Colonic mucosa (tissue), 4 donors: ENCODE measurements at regions of chr3 and their contacts with region 1.

Region 1: GRCh38 chr3:186540221-186540834 is 3.9 kb downstream of the CRYGS start:
- DNase-seq: peak; percentile 81
- H3K4me3 ChIP-seq: no peak overlapping the region
- H3K27ac ChIP-seq: no peak overlapping the region
- H3K4me1 ChIP-seq: no peaks in the 10 kb centered on the region
- H3K27me3 ChIP-seq: no peaks in the 10 kb centered on the region
- CTCF ChIP-seq: peak; percentile 74

Region 2: DNA sequence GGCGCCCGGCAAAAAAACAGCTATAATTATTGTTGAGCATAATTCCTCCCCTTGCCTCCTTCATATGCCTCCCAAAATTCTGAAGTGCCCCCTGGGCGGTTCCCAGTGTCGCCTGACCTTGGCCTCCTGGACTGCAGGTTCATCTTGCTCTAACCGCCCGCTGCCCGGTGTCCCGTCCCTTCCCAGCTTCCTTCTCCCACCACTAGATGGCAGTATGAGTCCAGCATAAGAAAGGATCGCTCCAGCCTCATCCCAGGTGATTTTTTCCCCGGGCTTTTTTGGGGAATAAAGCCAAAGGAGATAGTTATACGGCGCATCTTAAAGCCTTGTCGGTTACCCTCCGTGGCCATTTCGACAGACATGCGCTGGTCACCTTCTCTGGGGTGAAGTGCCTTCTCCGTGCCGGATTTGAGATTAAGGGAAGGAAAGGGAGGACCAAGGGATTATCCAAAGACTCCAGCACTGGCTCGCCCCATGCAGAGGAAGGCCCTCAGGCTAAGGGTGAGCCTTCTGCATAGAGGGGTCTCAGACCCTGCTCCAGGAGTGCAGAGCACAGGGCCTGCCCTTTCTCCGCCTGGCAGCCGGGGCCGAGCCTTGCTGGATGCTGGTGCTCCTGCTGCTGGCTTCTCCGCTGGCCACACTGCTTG is 556.7 kb before region 1 on chr3:
- intact Hi-C with region 1: loop called (anchors 5 kb)
- DNase-seq: peak; percentile 81
- H3K4me3 ChIP-seq: no peak overlapping the region
- H3K27ac ChIP-seq: no peak overlapping the region
- H3K4me1 ChIP-seq: no peaks in the 10 kb centered on the region
- H3K27me3 ChIP-seq: no peaks in the 10 kb centered on the region
- CTCF ChIP-seq: peak; percentile 88

Region 3: DNA sequence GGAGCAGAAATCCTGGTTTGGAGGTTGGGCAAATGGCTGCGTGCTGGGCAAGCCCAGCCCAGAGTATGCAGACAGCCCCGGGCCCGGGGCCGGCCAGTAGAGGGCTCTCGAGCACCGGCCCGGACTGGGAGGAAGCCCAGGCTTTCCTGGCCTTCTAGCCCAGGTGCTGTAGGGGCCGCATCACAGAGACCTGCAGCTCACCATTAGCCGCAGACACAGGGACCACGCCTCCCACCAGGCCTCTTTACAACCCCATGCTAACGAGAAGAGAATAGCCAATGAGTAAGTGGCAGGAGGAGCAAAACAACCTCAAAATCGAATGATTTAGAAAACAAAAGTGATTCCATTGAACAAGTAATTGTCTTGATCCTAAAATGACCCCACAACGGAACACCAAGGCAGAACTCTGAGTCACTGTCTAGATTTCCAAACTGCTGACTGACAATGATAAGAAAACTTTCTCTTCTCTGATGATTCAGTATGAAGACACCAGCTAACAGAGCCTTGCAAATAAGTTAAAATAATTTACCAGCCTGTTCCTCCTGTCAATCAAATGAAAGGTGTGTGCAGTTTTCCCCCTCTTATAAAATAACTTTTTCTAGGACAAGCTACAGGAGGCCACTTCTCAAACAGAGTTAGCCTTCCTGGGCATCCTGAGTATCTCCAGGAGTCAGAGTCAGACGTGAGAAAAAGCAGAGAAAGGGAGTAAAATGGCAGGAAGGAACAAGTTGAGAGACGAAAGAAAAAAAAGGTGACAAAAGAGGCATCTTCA is 280.5 kb before region 1 on chr3:
- intact Hi-C with region 1: loop called (anchors 2 kb)
- DNase-seq: peak; percentile 58
- H3K4me3 ChIP-seq: no peak overlapping the region
- H3K27ac ChIP-seq: no peak overlapping the region
- H3K4me1 ChIP-seq: no peaks in the 10 kb centered on the region
- H3K27me3 ChIP-seq: no peaks in the 10 kb centered on the region
- CTCF ChIP-seq: peak; percentile 70

Region 4: DNA sequence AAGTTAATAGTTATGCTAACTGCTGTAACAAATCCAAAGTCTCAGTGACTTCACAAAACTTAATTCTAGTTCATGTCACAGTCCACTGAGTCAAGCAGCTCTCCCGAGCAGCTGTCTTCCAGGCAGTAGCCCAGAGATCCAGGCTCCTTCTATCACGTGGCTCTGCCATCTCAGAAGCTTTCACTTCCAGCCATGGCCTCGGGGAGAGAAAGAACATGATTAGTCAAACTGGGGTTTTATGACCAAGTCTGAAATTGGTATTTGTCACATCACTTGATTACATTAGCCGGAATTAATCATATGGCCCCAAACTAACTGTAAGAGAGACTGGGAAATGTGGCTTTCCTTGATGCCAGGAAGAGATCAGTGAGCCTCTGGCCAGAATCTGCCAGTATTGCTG is 108.1 kb before region 1 on chr3:
- intact Hi-C with region 1: no loop called
- DNase-seq: no peak
- H3K4me3 ChIP-seq: no peak overlapping the region
- H3K27ac ChIP-seq: no peak overlapping the region
- H3K4me1 ChIP-seq: no peaks in the 10 kb centered on the region
- H3K27me3 ChIP-seq: no peaks in the 10 kb centered on the region
- CTCF ChIP-seq: no peak